Pancreas (tissue), 10 donors: ENCODE measurements at regions of chr11 and their contacts with region 1.

Region 1: DNA sequence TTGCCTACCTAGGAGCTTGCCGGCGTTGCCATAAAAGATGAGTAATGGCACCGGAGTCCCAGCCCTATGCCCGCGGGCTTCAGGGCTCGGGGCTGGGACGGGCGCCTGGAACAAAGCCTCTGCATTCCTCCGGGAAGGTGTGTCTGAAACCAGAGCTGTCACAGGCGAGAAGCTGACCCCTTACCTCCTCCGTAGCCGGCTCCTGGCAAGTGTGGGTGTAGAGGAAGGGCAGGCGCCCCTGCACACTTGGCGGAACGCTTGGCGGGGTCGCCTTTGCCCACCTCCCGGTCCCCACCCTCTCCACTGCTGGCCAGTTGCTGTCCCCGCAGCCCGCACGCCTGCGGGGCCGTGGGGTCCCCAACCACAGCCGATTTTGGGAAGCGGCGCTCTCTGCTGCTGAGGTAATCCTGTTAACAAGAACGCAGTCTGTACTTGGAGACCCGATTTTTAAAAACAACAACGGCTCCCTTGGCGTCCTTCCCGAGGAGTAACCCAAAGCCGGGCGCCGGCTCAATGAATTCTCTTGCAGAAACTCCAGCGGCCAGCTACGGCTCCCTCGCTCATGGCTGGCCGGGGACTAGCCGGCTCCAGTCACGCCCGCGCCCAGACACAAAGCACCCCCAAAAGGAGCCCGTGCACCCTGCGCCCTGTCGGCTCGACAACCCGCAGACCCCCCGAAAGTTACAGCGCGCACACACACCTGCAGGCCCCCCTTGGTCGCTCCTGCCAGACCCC is 89.2 kb downstream of the PLEKHA7 start:
- DNase-seq: peak; percentile 63 to 88 (median 83)
- ATAC-seq: peak; percentile 86 to 91 (median 88)
- H3K4me3 ChIP-seq: peak overlapping the region; percentile 18 to 53 (median 39)
- H3K27ac ChIP-seq: peak overlapping the region; percentile 64 to 83 (median 70)
- H3K4me1 ChIP-seq: peaks cover 5 to 24% (median 17%) of the 10 kb centered on the region in 3 donors
- H3K27me3 ChIP-seq: no peaks in the 10 kb centered on the region
- CTCF ChIP-seq: no peak

Region 2: GRCh38 chr11:16843294-16843693 is 81.7 kb before region 1 on chr11:
- intact Hi-C with region 1: loop called in 1 of 3 experiments (anchors 10 kb)
- DNase-seq: no peak
- ATAC-seq: no peak
- H3K4me3 ChIP-seq: no peak overlapping the region
- H3K27ac ChIP-seq: no peak overlapping the region
- H3K4me1 ChIP-seq: no peaks in the 10 kb centered on the region
- H3K27me3 ChIP-seq: no peaks in the 10 kb centered on the region
- CTCF ChIP-seq: no peak